ENCODE measurements at regions of chr6 and their contacts with region 1.

Region 1: DNA sequence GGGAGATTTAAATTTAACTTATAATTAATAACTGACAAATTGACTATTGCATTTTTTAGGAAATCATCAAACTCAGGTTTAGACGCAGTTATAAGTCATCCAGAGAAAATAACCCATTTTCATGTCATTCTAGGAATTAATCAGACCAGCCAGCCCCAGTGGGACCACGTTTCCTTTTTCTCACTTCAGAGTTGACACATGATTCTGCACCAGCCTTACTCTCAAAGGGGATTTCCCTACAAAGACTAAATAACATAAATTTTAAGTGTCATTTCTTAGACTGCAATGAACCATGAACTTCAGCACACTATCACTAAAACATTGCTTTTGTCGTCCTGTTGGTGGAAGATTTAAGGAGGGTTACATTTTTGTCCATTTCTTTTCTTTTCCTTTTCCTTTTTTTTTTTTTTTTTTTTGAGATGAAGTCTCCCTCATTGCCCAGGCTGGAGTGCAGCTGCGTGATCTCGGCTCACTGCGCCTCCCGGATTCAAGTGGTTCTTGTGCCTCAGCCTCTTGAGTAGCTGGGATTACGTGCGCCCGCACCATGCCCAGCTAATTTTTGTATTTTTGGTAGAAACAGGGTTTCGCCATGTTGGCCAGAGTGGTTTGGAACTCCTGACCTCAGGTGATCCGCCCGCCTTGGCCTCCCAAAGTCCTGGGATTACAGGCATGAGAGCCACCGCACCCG is 3.6 kb downstream of the IPCEF1 start:
- DNase-seq: no peak
- H3K4me3 Mint-ChIP-seq: no peak overlapping the region
- H3K27ac Mint-ChIP-seq: no peak overlapping the region
- H3K4me1 Mint-ChIP-seq: peaks cover 14% of the 10 kb centered on the region
- H3K27me3 Mint-ChIP-seq: peaks cover 33% of the 10 kb centered on the region

Region 2: GRCh38 chr6:154165478-154166189 is 187.4 kb before region 1 on chr6:
- intact Hi-C with region 1: no loop called
- DNase-seq: no peak
- H3K4me3 Mint-ChIP-seq: no peak overlapping the region
- H3K27ac Mint-ChIP-seq: no peak overlapping the region
- H3K4me1 Mint-ChIP-seq: peaks cover 9% of the 10 kb centered on the region
- H3K27me3 Mint-ChIP-seq: peaks cover 2% of the 10 kb centered on the region

Region 3: DNA sequence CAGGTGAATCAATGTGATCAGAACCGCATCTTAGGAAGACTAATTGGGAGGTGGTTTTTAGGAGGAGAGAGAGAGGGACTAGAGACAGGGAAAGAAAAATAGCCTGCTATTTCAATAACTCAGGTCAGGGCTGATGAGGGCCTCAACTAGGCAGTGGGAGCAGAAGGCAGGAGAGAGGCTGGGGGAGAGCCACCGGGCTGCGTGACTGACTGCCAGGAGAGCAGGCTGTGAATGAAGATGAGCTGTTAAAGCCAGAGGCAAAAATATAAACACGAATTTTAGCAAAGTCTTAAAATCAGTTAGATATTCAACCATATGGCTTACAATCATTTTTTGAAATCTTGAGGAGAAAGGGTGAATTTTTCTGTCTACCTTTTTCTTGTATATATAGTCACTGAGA is 146.0 kb before region 1 on chr6:
- intact Hi-C with region 1: no loop called
- DNase-seq: no peak
- H3K4me3 Mint-ChIP-seq: no peak overlapping the region
- H3K27ac Mint-ChIP-seq: no peak overlapping the region
- H3K4me1 Mint-ChIP-seq: no peaks in the 10 kb centered on the region
- H3K27me3 Mint-ChIP-seq: no peaks in the 10 kb centered on the region

Region 4: GRCh38 chr6:154247119-154247861 is 105.8 kb before region 1 on chr6:
- intact Hi-C with region 1: loop called (anchors 5 kb)
- DNase-seq: peak; percentile 74
- H3K4me3 Mint-ChIP-seq: peak overlapping the region; percentile 83
- H3K27ac Mint-ChIP-seq: peak overlapping the region; percentile 78
- H3K4me1 Mint-ChIP-seq: peaks cover 72% of the 10 kb centered on the region
- H3K27me3 Mint-ChIP-seq: peaks cover 6% of the 10 kb centered on the region

Region 5: GRCh38 chr6:154267508-154268106 is 85.4 kb before region 1 on chr6:
- intact Hi-C with region 1: loop called (anchors 1 kb)
- DNase-seq: no peak
- H3K4me3 Mint-ChIP-seq: no peak overlapping the region
- H3K27ac Mint-ChIP-seq: peak overlapping the region; percentile 39
- H3K4me1 Mint-ChIP-seq: peaks cover 15% of the 10 kb centered on the region
- H3K27me3 Mint-ChIP-seq: peaks cover 17% of the 10 kb centered on the region

Region 6: GRCh38 chr6:154276810-154277628 is 76.0 kb before region 1 on chr6:
- intact Hi-C with region 1: loop called (anchors 5 kb)
- DNase-seq: peak; percentile 56
- H3K4me3 Mint-ChIP-seq: peak overlapping the region; percentile 54
- H3K27ac Mint-ChIP-seq: peak overlapping the region; percentile 80
- H3K4me1 Mint-ChIP-seq: peaks cover 19% of the 10 kb centered on the region
- H3K27me3 Mint-ChIP-seq: peaks cover 15% of the 10 kb centered on the region

Region 7: DNA sequence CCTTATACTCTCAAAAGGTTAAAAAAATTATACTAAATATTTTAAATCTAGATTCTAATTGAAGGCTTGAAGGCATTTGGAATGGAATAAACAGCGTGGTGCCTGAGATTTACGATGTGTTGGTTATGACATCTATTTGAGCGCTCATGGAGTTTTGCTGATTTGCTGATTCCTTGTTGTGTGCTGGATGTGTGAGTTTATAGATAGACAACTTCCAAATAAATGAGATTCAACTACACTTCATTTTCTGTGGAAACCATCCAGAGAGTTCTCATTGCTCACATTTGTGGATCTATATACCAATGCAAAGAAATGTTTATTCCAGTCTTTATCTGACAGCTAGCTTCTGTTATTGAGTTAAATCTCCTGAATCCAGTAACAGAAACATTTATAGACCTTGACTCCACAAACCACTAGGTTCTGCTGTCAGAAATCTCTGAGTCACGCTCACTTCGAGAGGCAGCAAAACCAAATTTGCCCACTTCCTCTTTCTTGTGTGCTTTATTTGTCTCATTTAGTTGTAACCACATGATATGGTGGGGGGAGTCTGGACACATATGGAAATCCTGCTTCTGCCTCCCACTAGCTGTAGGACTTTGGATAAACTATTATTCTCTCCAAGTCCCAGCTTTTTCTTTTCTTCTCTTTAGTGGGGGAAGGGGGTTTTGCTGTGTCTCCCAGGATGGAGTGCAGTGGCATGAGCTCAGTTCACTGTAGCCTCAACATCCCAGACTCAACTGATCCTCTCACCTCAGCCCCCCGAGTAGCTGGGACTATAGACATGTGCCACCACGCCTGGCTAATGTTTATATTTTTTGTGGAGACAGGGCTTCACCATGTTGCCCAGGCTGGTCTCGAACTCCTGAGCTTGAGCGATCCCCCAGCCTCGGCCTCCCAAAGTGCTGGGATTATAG is 50.9 kb before region 1 on chr6:
- intact Hi-C with region 1: loop called (anchors 5 kb)
- DNase-seq: peak; percentile 67
- H3K4me3 Mint-ChIP-seq: no peak overlapping the region
- H3K27ac Mint-ChIP-seq: no peak overlapping the region
- H3K4me1 Mint-ChIP-seq: peaks cover 4% of the 10 kb centered on the region
- H3K27me3 Mint-ChIP-seq: peaks cover 19% of the 10 kb centered on the region

Region 8: GRCh38 chr6:154319231-154319858 is 33.7 kb before region 1 on chr6:
- intact Hi-C with region 1: loop called (anchors 5 kb)
- DNase-seq: no peak
- H3K4me3 Mint-ChIP-seq: no peak overlapping the region
- H3K27ac Mint-ChIP-seq: no peak overlapping the region
- H3K4me1 Mint-ChIP-seq: peaks cover 3% of the 10 kb centered on the region
- H3K27me3 Mint-ChIP-seq: no peaks in the 10 kb centered on the region

Region 9: DNA sequence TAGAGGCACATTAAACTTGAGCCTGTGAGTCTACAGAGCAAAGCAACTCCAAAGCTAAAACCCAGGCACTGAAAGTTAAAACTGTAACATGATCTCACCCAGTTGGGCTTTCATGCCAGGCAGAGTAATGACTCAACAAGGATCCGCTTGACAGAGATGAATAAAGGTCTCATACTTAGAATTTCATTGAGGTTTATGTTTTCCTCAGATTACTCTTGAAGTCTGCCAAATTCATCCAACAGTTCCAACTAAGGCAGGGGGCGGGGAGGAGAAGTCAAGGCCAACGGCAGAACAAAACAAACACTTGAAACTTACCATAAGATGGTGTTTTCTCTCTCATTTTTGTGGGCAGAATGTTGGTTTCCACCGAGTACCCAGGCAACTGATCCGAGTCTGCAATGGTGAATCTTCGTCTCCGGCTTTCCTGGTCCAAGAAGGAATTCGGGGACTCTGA is 57.6 kb after region 1 on chr6:
- intact Hi-C with region 1: loop called (anchors 2 kb)
- DNase-seq: no peak
- H3K4me3 Mint-ChIP-seq: no peak overlapping the region
- H3K27ac Mint-ChIP-seq: no peak overlapping the region
- H3K4me1 Mint-ChIP-seq: peaks cover 1% of the 10 kb centered on the region
- H3K27me3 Mint-ChIP-seq: peaks cover 4% of the 10 kb centered on the region